ENCODE measurements at regions of chr11 and their contacts with region 1.

Region 1: DNA sequence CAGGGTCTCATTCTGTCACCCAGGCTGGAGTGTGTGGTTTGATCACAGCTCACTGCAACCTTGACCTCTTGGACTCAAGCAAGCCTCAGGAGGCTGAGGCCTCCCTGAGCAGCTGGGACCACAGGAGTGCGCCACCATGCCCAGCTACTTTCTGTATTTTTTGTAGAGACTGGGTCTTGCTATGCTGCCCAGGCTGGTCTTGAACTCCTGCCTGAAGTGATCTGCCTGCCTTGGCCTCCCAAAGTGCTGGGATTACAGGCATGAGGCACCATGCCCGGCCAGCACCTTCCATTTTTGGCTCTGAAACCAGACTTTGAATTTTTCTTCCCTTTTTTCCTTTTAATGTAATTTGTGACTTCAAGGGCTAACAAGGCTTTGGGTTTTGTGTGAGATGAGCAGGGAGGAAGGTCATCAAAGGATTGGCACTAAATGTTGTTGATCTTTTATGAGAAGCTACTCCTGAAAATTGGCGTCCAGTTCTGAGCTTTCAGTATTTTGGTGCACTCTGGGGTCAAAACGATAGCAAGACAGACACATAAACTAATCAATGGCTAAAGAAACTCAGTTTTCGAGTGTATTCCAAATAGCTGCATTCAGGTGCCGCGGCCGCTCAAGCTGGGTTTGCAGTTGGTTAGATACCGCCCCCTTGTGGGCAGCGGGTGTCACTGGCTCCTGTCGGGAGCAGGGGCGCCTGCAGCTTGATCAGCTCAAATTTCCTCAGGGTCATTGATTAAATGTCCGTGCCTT is 51.9 kb upstream of the CLMP start:
- DNase-seq: peak; percentile 90
- ATAC-seq: peak; percentile 94
- H3K4me3 Mint-ChIP-seq: no peak overlapping the region
- H3K27ac Mint-ChIP-seq: no peak overlapping the region
- H3K4me1 Mint-ChIP-seq: peaks cover 7% of the 10 kb centered on the region
- H3K27me3 Mint-ChIP-seq: peaks cover 26% of the 10 kb centered on the region

Region 2: GRCh38 chr11:122976734-122977469 is 270.0 kb before region 1 on chr11:
- CTCF ChIA-PET with region 1: no interaction called
- POLR2A ChIA-PET with region 1: no interaction called
- DNase-seq: no peak
- ATAC-seq: no peak
- H3K4me3 Mint-ChIP-seq: no peak overlapping the region
- H3K27ac Mint-ChIP-seq: peak overlapping the region; percentile 68
- H3K4me1 Mint-ChIP-seq: peaks cover 18% of the 10 kb centered on the region
- H3K27me3 Mint-ChIP-seq: peaks cover 82% of the 10 kb centered on the region

Region 3: DNA sequence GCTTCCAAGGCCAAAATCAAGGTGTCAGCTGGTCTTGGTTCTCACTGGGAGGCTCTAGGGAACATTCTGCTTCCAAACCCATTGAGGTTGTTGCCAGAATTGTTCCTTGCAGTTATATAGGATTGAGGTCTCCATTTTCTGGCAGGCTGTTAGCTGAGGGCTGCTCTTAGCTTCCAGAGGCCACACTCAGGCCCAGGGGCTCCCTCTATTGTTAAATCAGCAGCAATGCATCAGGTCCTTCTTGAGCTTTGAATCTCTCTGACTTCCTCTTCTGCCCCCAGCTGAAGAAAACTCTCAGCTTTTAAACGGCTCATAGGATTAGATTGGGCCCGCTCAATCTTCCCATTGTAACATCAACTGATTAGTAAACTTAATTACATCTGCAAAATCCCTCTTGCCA is 226.0 kb before region 1 on chr11:
- CTCF ChIA-PET with region 1: interaction called, 20 read pairs
- POLR2A ChIA-PET with region 1: no interaction called
- DNase-seq: peak; percentile 53
- ATAC-seq: peak; percentile 74
- H3K4me3 Mint-ChIP-seq: no peak overlapping the region
- H3K27ac Mint-ChIP-seq: no peak overlapping the region
- H3K4me1 Mint-ChIP-seq: peaks cover 7% of the 10 kb centered on the region
- H3K27me3 Mint-ChIP-seq: peaks cover 16% of the 10 kb centered on the region

Region 4: GRCh38 chr11:123093739-123094138 is 153.2 kb before region 1 on chr11:
- CTCF ChIA-PET with region 1: interaction called, 12 read pairs
- POLR2A ChIA-PET with region 1: no interaction called
- DNase-seq: no peak
- ATAC-seq: no peak
- H3K4me3 Mint-ChIP-seq: no peak overlapping the region
- H3K27ac Mint-ChIP-seq: no peak overlapping the region
- H3K4me1 Mint-ChIP-seq: peaks cover 3% of the 10 kb centered on the region
- H3K27me3 Mint-ChIP-seq: no peaks in the 10 kb centered on the region

Region 5: GRCh38 chr11:123110356-123110755 is 136.6 kb before region 1 on chr11:
- CTCF ChIA-PET with region 1: interaction called, 279 read pairs
- POLR2A ChIA-PET with region 1: no interaction called
- DNase-seq: no peak
- ATAC-seq: no peak
- H3K4me3 Mint-ChIP-seq: no peak overlapping the region
- H3K27ac Mint-ChIP-seq: peak overlapping the region; percentile 17
- H3K4me1 Mint-ChIP-seq: peaks cover 4% of the 10 kb centered on the region
- H3K27me3 Mint-ChIP-seq: peaks cover 13% of the 10 kb centered on the region

Region 6: DNA sequence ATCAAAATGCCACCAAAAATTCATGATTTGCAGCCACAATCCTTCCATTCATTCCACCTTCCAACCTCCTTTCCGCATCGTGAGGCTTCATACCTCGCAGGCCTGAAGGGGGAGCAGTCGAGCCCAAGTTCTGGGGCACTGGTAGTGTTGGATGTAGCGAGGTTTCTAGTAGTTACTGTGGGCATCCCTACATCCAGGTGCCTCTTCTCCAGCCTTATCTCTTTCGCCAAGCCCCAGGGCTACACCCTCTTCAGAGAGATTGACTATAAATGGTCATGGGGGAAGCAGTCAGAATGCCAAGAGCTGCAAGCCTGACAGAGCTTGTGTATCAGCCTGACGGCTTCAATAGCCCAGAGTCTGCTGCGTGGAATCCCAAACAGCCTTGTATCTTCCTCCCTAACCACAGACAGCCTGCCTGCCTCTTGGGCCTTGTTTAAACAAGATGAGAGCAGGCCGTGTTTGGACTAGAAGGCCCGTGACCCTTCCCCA is 80.8 kb before region 1 on chr11:
- CTCF ChIA-PET with region 1: interaction called, 66 read pairs
- POLR2A ChIA-PET with region 1: no interaction called
- DNase-seq: peak; percentile 30
- ATAC-seq: peak; percentile 42
- H3K4me3 Mint-ChIP-seq: no peak overlapping the region
- H3K27ac Mint-ChIP-seq: no peak overlapping the region
- H3K4me1 Mint-ChIP-seq: no peaks in the 10 kb centered on the region
- H3K27me3 Mint-ChIP-seq: peaks cover 8% of the 10 kb centered on the region

Region 7: DNA sequence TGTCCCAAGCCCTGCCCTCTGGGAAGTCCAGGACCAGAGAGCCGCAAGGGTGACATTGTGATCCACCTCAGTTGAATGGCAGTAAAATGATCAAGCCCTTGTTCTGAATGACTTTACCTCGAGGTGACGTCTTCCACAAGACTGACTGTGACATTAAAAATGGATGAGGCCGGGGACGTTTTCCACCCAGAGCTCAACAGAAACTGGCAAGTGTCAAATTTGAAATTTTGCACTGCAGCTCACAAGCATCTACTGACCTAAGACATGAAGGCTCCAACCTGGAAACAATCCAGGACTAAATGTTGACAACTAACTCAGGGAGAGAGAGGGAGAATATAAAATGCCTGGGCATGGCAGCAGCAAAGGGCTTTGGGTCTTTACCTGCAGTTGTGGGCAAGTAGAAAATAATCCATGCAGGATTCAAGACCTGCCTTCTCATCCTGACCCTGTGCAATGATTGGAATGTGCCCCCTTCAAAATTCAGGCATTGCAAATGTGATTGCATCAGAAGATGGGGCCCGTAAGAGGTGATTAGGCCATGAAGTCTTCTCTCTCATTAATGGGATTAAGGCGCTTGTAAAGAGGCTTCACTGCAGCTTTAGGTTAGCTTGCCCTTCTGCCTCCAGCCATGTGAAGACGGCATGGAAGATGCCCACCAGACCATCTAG is 18.3 kb before region 1 on chr11:
- CTCF ChIA-PET with region 1: interaction called, 26 read pairs
- POLR2A ChIA-PET with region 1: no interaction called
- DNase-seq: no peak
- ATAC-seq: no peak
- H3K4me3 Mint-ChIP-seq: no peak overlapping the region
- H3K27ac Mint-ChIP-seq: no peak overlapping the region
- H3K4me1 Mint-ChIP-seq: peaks cover 12% of the 10 kb centered on the region
- H3K27me3 Mint-ChIP-seq: peaks cover 31% of the 10 kb centered on the region

Region 8: GRCh38 chr11:123261345-123262106 is 14.6 kb after region 1 on chr11:
- CTCF ChIA-PET with region 1: interaction called, 18 read pairs
- POLR2A ChIA-PET with region 1: interaction called, 3 read pairs
- DNase-seq: peak; percentile 79
- ATAC-seq: peak; percentile 93
- H3K4me3 Mint-ChIP-seq: no peak overlapping the region
- H3K27ac Mint-ChIP-seq: no peak overlapping the region
- H3K4me1 Mint-ChIP-seq: peaks cover 27% of the 10 kb centered on the region
- H3K27me3 Mint-ChIP-seq: peaks cover 28% of the 10 kb centered on the region

Measured in activated CD8-positive, alpha-beta T cell treated with anti-CD3 and anti-CD28 coated beads, Interleukin-2, amount 10 ng/mL, durations not matched to agents 7 days and 5 days (primary cell).